Vagina (tissue), 2 donors: ENCODE measurements at regions of chr6 and their contacts with region 1.

Region 1: DNA sequence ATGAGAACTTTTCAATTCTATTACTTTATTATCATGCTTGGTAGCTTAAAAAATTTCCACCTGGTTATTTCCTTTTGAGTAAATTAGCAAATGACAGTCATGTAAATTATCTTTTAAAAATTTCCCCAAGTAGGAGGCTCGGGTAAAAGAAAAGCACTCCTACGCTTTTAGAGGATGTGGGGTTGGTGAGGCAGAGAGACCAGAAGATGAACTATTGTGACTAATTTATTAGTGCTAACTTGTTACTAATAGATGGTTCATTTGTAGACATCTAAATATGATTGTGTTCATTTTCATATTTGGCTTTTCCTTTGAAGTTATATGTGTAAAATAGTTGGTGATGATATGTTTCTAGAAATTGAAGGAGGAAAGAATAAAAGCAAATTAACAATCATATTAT is 27.0 kb downstream of the ZNF292 start:
- DNase-seq: no peak
- H3K4me3 ChIP-seq: no peak overlapping the region
- H3K27ac ChIP-seq: no peak overlapping the region
- H3K4me1 ChIP-seq: peaks cover 43% of the 10 kb centered on the region
- H3K27me3 ChIP-seq: no peaks in the 10 kb centered on the region
- CTCF ChIP-seq: no peak
- POLR2A ChIP-seq: no peak

Region 2: DNA sequence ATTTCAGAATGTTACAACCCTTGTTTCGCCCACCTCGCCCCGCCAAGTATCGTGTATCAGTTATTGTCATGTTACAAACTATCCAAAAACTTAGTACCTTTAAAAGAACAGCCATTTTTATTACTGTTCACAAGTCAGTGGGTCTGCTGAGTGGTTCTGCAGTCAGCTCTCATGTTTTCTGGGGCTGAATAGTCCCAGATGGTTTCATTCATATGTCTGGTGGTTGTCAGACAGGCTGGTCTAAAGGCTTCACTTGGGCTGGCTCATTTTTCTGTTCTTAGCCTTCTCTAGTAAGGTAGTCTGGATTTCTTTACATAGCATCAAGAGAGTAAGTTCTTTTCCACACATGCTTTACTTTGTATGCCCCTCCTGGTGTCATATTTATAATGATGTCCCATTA is 18.3 kb before region 1 on chr6:
- intact Hi-C with region 1: loop called (anchors 1 kb)
- DNase-seq: no peak
- H3K4me3 ChIP-seq: no peak overlapping the region
- H3K27ac ChIP-seq: no peak overlapping the region
- H3K4me1 ChIP-seq: peaks cover 76% of the 10 kb centered on the region
- H3K27me3 ChIP-seq: no peaks in the 10 kb centered on the region
- CTCF ChIP-seq: no peak
- POLR2A ChIP-seq: no peak